B cell (primary cell): ENCODE measurements at regions of chr1 and their contacts with region 1.

Region 1: DNA sequence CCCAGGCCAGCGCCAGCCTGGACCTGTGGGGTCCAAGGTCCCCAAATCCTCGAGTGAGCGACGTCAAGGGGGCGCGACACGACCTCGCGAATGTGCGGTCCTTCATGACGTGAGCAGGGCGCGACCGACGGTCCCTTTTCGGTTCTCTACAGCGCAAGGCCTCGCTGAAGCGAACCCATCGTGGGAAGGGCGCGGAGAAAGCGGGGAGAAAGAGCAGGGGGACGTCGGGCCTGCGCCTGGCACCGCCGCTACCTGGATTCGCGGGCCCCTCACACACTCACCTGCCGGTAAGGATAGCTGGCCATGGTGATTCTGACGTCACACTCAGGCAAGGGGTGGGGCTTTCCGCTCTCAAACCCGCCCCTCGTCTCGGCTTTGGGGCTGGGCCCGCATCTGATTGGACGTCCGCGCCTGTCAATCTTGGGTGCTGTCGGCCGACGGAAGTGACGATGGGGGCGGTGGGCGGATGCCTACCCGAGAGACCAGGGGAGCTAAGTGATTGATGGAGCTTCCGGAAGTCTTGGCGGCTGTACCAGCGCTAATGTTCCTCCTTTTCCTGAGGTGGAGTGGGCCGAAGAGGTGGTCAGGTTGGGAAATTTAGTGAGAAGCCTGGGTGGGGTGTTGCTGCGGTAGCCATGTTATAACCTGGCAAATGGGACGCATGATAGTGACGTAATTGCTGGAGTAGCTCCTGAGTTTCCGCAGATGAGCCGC is at the start of gene PEF1:
- DNase-seq: peak; percentile 100
- ATAC-seq: peak; percentile 93
- H3K4me3 ChIP-seq: peak within 1 kb of the TSS; percentile 70 to 98 (median 95)
- H3K4me3 Mint-ChIP-seq: peak within 1 kb of the TSS; percentile 98
- H3K27ac ChIP-seq: peak within 1 kb of the TSS; percentile 98 to 99
- H3K27ac Mint-ChIP-seq: peak within 1 kb of the TSS; percentile 99
- H3K4me1 ChIP-seq: peaks cover 17 to 19% of the 10 kb centered on the region in 2 donors
- H3K4me1 Mint-ChIP-seq: peaks cover 31% of the 10 kb centered on the region
- H3K27me3 ChIP-seq: no peaks in the 10 kb centered on the region
- H3K27me3 Mint-ChIP-seq: no peaks in the 10 kb centered on the region
- CTCF ChIP-seq: no peak
- total RNA-seq, gene PEF1: 36.7 and 46.9 TPM in 2 replicates

Region 2: DNA sequence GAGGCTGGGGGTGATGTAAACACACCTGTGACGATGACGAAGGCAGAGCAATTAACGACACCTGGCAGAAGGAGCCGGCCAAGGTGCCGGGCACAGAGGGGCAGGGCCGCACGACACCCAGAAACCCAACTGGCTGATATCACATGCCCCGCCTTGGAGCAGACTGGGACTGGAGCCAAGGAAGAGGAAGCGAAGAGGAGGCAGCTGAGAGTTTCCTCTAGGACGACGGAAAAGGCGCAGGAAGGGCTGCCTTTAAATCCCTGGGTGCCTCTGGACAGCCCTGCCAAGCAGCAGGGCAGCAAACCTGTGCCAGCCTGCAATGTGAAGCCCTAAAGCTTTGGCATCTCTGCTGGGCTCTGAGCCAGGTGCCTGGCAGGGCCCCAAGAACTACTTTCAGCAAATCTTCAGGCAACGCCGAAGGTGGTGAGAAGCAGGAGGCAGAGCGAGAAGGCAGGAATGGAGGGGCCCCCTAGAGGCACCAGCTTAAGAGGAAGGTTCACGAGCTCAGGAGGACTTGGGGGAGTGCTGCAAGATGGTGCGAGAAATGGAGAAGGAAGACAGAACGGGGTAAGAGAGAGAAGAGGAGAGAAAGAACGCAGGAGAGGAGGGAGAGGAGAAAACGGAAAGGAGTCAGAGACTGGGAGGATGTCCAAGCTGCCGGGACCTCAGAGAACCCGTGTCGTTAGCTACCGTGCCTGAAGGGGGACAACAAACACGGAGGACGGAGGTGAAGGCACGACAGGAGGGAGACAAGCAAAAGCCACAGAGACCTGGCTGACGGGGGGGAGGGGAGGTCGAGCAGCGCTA is 25.3 kb after region 1 on chr1:
- CTCF ChIA-PET with region 1: no interaction called
- POLR2A ChIA-PET with region 1: no interaction called
- intact Hi-C with region 1: no loop called
- DNase-seq: peak; percentile 55
- ATAC-seq: peak; percentile 60
- H3K4me3 ChIP-seq: peak overlapping the region in 3 of 5 experiments; percentile 5 to 15 (median 9)
- H3K4me3 Mint-ChIP-seq: peak overlapping the region; percentile 54
- H3K27ac ChIP-seq: no peak overlapping the region
- H3K27ac Mint-ChIP-seq: no peak overlapping the region
- H3K4me1 ChIP-seq: peaks cover 10 to 12% of the 10 kb centered on the region in 2 donors
- H3K4me1 Mint-ChIP-seq: peaks cover 10% of the 10 kb centered on the region
- H3K27me3 ChIP-seq: peaks cover 0 to 25% (median 9%) of the 10 kb centered on the region in 4 experiments
- H3K27me3 Mint-ChIP-seq: peaks cover 33% of the 10 kb centered on the region
- CTCF ChIP-seq: no peak

Region 3: DNA sequence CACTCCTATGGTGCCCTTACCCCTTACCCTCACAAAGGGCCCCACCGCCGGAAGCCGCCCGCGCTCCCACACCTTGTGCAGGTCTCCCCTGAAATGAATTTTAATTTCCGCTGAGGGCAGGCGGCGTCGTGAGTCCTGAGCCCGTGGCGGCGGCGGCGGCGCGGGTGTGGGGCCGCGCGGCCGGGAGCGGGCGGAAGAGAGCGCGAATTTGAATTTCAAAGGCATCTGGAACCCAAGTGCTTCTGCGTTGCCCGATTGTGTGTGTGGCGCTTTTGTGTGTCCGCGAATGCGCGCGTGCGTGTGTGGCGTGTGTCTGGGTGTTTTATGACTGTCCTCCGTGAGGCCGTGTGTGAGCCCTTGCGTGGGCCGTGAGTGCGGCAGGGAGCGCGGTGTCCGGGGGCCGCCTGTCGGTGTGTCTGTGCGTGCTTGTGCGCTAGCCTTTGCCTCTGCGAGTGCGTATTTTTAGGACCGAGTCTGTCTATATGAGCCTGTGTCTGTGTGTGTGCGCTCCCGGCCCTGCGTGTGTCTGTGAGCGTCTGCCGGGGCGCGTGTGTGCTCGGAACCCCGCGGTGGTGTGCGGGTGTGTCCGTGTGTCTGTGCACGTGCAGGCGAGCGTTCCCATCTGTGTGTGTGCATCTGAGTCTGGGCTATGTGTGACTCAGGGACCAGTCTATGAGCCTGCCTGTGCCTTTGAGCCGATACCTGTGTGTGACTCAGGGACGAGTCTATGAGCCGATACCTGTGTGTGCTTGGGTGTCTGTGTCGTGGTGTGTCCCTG is 127.4 kb after region 1 on chr1:
- CTCF ChIA-PET with region 1: no interaction called
- POLR2A ChIA-PET with region 1: no interaction called
- intact Hi-C with region 1: loop called (anchors 5 kb)
- DNase-seq: peak; percentile 61
- ATAC-seq: peak; percentile 44
- H3K4me3 ChIP-seq: peak overlapping the region; percentile 22 to 64 (median 45)
- H3K4me3 Mint-ChIP-seq: peak overlapping the region; percentile 93
- H3K27ac ChIP-seq: no peak overlapping the region
- H3K27ac Mint-ChIP-seq: peak overlapping the region; percentile 57
- H3K4me1 ChIP-seq: peaks cover 38 to 39% of the 10 kb centered on the region in 2 donors
- H3K4me1 Mint-ChIP-seq: peaks cover 38% of the 10 kb centered on the region
- H3K27me3 ChIP-seq: peaks cover 0 to 56% (median 39%) of the 10 kb centered on the region in 4 experiments
- H3K27me3 Mint-ChIP-seq: peaks cover 49% of the 10 kb centered on the region
- CTCF ChIP-seq: no peak